MCF 10A (cell line): ENCODE measurements at regions of chrX and their contacts with region 1.

Region 1: GRCh38 chrX:30735839-30736238 is 82.6 kb downstream of the GK start:
- DNase-seq: peak; percentile 68
- H3K4me3 Mint-ChIP-seq: no peak overlapping the region
- H3K27ac Mint-ChIP-seq: no peak overlapping the region
- H3K4me1 Mint-ChIP-seq: peaks cover 6% of the 10 kb centered on the region
- H3K27me3 Mint-ChIP-seq: no peaks in the 10 kb centered on the region
- CTCF ChIP-seq: peak; percentile 74

Region 2: GRCh38 chrX:30748393-30748841 is 12.6 kb after region 1 on chrX:
- CTCF ChIA-PET with region 1: interaction called, 15 read pairs
- POLR2A ChIA-PET with region 1: interaction called, 3 read pairs
- intact Hi-C with region 1: no loop called
- DNase-seq: no peak
- H3K4me3 Mint-ChIP-seq: no peak overlapping the region
- H3K27ac Mint-ChIP-seq: no peak overlapping the region
- H3K4me1 Mint-ChIP-seq: no peaks in the 10 kb centered on the region
- H3K27me3 Mint-ChIP-seq: peaks cover 9% of the 10 kb centered on the region
- CTCF ChIP-seq: no peak

Region 3: GRCh38 chrX:30777575-30777974 is 41.7 kb after region 1 on chrX:
- CTCF ChIA-PET with region 1: no interaction called
- POLR2A ChIA-PET with region 1: no interaction called
- intact Hi-C with region 1: no loop called
- DNase-seq: no peak
- H3K4me3 Mint-ChIP-seq: no peak overlapping the region
- H3K27ac Mint-ChIP-seq: no peak overlapping the region
- H3K4me1 Mint-ChIP-seq: no peaks in the 10 kb centered on the region
- H3K27me3 Mint-ChIP-seq: peaks cover 13% of the 10 kb centered on the region
- CTCF ChIP-seq: no peak

Region 4: GRCh38 chrX:30812326-30812725 is 76.5 kb after region 1 on chrX:
- CTCF ChIA-PET with region 1: interaction called, 10 read pairs
- POLR2A ChIA-PET with region 1: interaction called, 4 read pairs
- intact Hi-C with region 1: no loop called
- DNase-seq: no peak
- H3K4me3 Mint-ChIP-seq: no peak overlapping the region
- H3K27ac Mint-ChIP-seq: no peak overlapping the region
- H3K4me1 Mint-ChIP-seq: no peaks in the 10 kb centered on the region
- H3K27me3 Mint-ChIP-seq: no peaks in the 10 kb centered on the region
- CTCF ChIP-seq: no peak

Region 5: GRCh38 chrX:30822068-30822681 is 86.3 kb after region 1 on chrX:
- CTCF ChIA-PET with region 1: interaction called, 17 read pairs
- POLR2A ChIA-PET with region 1: interaction called, 6 read pairs
- intact Hi-C with region 1: loop called (anchors 2 kb)
- DNase-seq: no peak
- H3K4me3 Mint-ChIP-seq: no peak overlapping the region
- H3K27ac Mint-ChIP-seq: no peak overlapping the region
- H3K4me1 Mint-ChIP-seq: no peaks in the 10 kb centered on the region
- H3K27me3 Mint-ChIP-seq: no peaks in the 10 kb centered on the region
- CTCF ChIP-seq: no peak

Region 6: DNA sequence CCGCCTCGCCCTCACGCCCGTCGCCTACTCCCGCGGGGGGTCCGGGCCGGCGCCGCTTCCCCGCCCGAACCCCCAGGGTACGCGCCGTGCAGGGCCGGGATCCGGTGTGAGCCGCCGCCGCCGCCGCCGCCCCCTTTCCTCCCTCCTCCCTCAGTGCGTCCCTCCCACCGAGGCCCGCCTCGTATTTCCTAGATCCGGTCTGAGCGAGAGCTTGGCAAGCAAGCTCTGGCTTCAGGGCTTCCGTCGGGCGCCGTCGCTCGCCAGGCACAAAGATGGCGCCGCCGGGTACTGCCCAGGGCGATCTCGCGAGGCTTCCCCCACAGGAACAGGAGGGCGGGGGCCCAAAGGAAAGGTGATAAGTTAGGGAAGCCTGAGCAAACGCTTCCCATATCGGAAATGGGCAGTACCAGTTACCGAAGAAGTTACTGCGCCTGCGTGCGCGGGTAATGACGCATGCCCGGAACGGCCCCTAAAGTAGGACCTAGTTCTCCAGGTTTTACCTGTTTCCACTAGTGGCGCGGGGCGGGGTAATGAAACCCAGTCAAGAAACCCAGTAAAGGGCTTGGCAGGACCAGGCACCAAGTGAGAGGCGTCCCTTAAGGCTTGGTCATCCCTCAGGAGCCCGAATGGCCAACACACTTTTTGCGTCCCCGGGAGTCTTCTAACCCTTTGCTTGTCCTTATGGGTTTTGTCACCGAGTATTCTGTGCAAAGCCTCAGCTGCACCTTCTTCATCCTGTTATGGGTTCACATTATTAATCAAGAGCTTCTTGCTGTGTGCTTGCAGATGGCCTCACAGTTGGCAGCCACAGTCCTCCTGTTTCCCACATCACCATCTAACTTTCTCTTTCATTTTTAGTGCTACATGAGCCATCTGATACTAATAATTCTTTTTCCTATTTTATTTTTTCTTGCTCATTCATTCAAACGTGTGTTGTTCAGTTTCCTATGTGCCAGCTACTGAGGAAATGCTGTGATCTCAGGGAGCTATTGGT is 153.6 kb after region 1 on chrX and contains the start of gene TAB3:
- CTCF ChIA-PET with region 1: no interaction called
- POLR2A ChIA-PET with region 1: no interaction called
- intact Hi-C with region 1: no loop called
- DNase-seq: peak; percentile 95
- H3K4me3 Mint-ChIP-seq: peak within 1 kb of the TSS; percentile 89
- H3K27ac Mint-ChIP-seq: peak within 1 kb of the TSS; percentile 87
- H3K4me1 Mint-ChIP-seq: peaks cover 27% of the 10 kb centered on the region
- H3K27me3 Mint-ChIP-seq: peaks cover 33% of the 10 kb centered on the region
- CTCF ChIP-seq: no peak
- total RNA-seq, gene TAB3: 27.5 and 28.4 TPM in 2 replicates

Region 7: DNA sequence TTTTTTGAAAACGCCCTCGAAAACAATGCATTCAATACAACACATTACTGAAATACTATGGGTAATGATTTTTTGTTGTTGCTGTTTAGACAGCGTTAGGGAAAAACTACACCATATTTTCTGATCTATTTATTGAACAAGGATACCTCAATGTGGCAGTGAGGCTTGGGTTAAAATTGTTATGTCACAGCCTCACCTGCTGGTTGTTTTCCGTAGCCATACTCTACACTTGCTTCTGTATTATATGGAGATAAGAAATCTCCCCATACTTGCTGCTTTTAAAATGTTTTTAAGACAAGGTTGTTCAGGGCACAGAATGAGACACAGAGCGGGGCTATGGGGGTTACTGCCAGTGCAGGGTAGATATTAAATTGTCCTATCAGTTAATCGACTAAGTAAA is 557.6 kb after region 1 on chrX:
- CTCF ChIA-PET with region 1: no interaction called
- POLR2A ChIA-PET with region 1: no interaction called
- intact Hi-C with region 1: no loop called
- DNase-seq: peak; percentile 4
- H3K4me3 Mint-ChIP-seq: no peak overlapping the region
- H3K27ac Mint-ChIP-seq: no peak overlapping the region
- H3K4me1 Mint-ChIP-seq: no peaks in the 10 kb centered on the region
- H3K27me3 Mint-ChIP-seq: peaks cover under 1% of the 10 kb centered on the region
- CTCF ChIP-seq: peak; percentile 12